ENCODE measurements at regions of chr3 and their contacts with region 1.

Region 1: DNA sequence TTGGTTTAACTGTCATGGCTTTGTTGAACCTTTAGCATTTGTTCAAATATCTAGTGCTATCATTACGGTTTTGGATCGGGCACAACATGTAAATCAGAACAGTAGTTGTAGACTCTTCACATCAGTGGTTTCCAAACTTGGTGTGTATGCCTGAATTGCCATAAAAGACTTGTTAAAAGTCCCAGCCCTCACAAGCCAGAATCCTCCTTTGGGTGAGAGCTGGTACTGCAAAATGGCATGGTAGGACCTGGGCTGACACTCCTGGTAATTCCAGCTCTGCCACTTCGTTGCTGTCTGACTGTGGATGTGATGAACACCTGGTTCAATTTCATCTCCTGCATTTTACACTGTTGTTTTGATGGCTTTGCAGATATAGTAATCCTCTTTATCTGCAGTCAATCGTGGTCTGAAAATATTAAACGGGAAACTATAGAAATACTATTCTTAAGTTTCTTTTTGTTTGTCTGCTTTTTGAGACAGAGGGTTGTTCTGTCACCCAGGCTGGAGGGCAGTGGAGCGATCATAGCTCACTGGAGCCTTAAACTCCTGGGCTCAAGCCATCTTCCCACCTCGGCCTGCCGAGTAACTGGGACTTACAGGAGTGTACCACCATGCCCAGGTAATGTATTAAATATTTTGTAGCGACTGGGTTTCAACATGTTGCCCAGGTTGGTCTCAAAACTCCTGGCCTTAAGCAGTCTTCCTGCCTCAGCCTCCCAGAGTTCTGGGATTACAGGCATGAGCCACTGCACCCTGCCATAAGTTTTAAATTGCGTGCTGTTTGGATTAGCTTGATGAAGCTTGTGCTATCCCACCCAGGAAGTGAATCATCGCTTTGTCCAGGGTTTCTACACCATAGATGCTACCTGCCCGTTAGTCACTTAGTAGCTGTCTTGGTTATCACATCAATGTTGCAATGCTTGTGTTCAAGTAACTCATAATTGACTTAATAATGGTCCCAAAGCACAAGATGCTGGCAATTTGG is 61.6 kb downstream of the RAB7A start:
- DNase-seq: peak in 1 of 2 donors; percentile 71
- ATAC-seq: peak; percentile 72 to 79 (median 79)
- H3K4me3 ChIP-seq: no peak overlapping the region
- H3K4me3 Mint-ChIP-seq: peak overlapping the region; percentile 81
- H3K27ac ChIP-seq: peak overlapping the region; percentile 72
- H3K27ac Mint-ChIP-seq: peak overlapping the region; percentile 80 to 83
- H3K4me1 ChIP-seq: peaks cover 33% of the 10 kb centered on the region
- H3K4me1 Mint-ChIP-seq: peaks cover 65 to 81% of the 10 kb centered on the region in 2 donors
- H3K27me3 ChIP-seq: no peaks in the 10 kb centered on the region
- H3K27me3 Mint-ChIP-seq: no peaks in the 10 kb centered on the region
- CTCF ChIP-seq: peak; percentile 28

Region 2: GRCh38 chr3:128742821-128743594 is 44.5 kb before region 1 on chr3:
- intact Hi-C with region 1: no loop called
- DNase-seq: no peak
- ATAC-seq: peak in 1 of 3 donors; percentile 24
- H3K4me3 ChIP-seq: no peak overlapping the region
- H3K4me3 Mint-ChIP-seq: no peak overlapping the region
- H3K27ac ChIP-seq: no peak overlapping the region
- H3K27ac Mint-ChIP-seq: no peak overlapping the region
- H3K4me1 ChIP-seq: peaks cover 8% of the 10 kb centered on the region
- H3K4me1 Mint-ChIP-seq: peaks cover 33 to 38% of the 10 kb centered on the region in 2 donors
- H3K27me3 ChIP-seq: no peaks in the 10 kb centered on the region
- H3K27me3 Mint-ChIP-seq: no peaks in the 10 kb centered on the region
- CTCF ChIP-seq: no peak

Region 3: GRCh38 chr3:128753715-128754114 is 33.8 kb before region 1 on chr3:
- intact Hi-C with region 1: loop called (anchors 5 kb)
- DNase-seq: no peak
- ATAC-seq: no peak
- H3K4me3 ChIP-seq: no peak overlapping the region
- H3K4me3 Mint-ChIP-seq: peak overlapping the region; percentile 2
- H3K27ac ChIP-seq: no peak overlapping the region
- H3K27ac Mint-ChIP-seq: peak overlapping the region; percentile 62 to 73
- H3K4me1 ChIP-seq: peaks cover 38% of the 10 kb centered on the region
- H3K4me1 Mint-ChIP-seq: peaks cover 82 to 83% of the 10 kb centered on the region in 2 donors
- H3K27me3 ChIP-seq: no peaks in the 10 kb centered on the region
- H3K27me3 Mint-ChIP-seq: no peaks in the 10 kb centered on the region
- CTCF ChIP-seq: no peak

Region 4: DNA sequence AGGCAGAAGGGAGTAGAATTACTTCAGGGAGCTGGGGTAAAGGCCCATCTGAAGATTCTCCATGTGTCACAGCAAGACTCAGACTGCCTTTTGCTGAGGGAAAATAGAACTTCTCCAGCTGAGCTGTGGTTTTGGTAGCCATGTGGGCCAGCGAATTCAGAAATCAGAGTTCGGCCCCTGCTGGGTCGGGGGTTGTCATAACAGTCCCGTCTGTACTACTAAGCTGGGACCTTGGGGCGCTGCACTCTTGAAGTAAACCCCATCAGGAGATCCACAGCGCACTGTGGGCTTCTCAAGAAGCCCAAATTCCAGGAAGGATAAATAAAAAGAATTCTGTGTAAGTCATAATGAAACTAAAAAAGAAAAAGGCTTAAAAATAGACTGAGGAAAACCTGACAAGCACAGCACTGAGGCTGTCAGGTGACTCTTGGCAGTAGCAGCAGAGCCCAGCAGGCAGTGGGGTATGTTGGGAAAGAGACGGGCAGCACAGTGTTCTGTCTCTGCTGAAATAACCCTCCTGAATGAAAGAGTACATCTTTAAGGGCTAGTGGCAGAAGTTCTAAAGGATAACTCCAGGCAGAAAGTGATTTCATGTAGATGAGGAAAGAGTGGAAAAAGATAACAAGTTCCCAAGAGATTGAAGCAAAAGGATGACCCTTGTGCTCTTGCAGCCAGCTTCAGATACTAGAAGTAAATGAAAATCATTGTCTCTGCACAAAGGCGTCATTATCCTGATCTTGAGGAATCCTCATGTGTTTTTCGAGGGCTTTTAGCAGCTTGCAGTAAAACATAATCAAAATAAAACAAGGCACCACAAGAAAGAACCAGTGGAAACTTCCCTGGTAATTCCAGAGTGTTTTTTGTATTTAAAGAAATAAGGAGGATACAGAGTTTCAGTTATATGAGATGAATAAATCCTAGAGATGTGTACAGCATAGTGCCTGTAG is 13.0 kb after region 1 on chr3:
- intact Hi-C with region 1: no loop called
- DNase-seq: no peak
- ATAC-seq: no peak
- H3K4me3 ChIP-seq: no peak overlapping the region
- H3K4me3 Mint-ChIP-seq: no peak overlapping the region
- H3K27ac ChIP-seq: no peak overlapping the region
- H3K27ac Mint-ChIP-seq: peak overlapping the region; percentile 89 to 95
- H3K4me1 ChIP-seq: peaks cover 12% of the 10 kb centered on the region
- H3K4me1 Mint-ChIP-seq: peaks cover 43% of the 10 kb centered on the region in 2 donors
- H3K27me3 ChIP-seq: no peaks in the 10 kb centered on the region
- H3K27me3 Mint-ChIP-seq: no peaks in the 10 kb centered on the region
- CTCF ChIP-seq: no peak